A673 (cell line): ENCODE measurements at regions of chr19 and their contacts with region 1.

Region 1: GRCh38 chr19:3304871-3305423 is 61.4 kb upstream of the NFIC start:
- DNase-seq: peak; percentile 89
- H3K4me3 ChIP-seq: peak overlapping the region; percentile 9
- H3K27ac ChIP-seq: no peak overlapping the region
- H3K4me1 ChIP-seq: no peaks in the 10 kb centered on the region
- H3K27me3 ChIP-seq: no peaks in the 10 kb centered on the region
- CTCF ChIP-seq: peak; percentile 85

Region 2: GRCh38 chr19:2978454-2978767 is 326.5 kb before region 1 on chr19:
- CTCF ChIA-PET with region 1: interaction called, 4 read pairs
- POLR2A ChIA-PET with region 1: interaction called, 14 read pairs
- intact Hi-C with region 1: no loop called
- DNase-seq: no peak
- H3K4me3 ChIP-seq: no peak overlapping the region
- H3K27ac ChIP-seq: no peak overlapping the region
- H3K4me1 ChIP-seq: peaks cover 41% of the 10 kb centered on the region
- H3K27me3 ChIP-seq: no peaks in the 10 kb centered on the region
- CTCF ChIP-seq: no peak

Region 3: GRCh38 chr19:3163230-3163886 is 141.6 kb before region 1 on chr19:
- CTCF ChIA-PET with region 1: no interaction called
- POLR2A ChIA-PET with region 1: no interaction called
- intact Hi-C with region 1: no loop called
- DNase-seq: peak; percentile 85
- H3K4me3 ChIP-seq: no peak overlapping the region
- H3K27ac ChIP-seq: no peak overlapping the region
- H3K4me1 ChIP-seq: no peaks in the 10 kb centered on the region
- H3K27me3 ChIP-seq: no peaks in the 10 kb centered on the region
- CTCF ChIP-seq: peak; percentile 94

Region 4: DNA sequence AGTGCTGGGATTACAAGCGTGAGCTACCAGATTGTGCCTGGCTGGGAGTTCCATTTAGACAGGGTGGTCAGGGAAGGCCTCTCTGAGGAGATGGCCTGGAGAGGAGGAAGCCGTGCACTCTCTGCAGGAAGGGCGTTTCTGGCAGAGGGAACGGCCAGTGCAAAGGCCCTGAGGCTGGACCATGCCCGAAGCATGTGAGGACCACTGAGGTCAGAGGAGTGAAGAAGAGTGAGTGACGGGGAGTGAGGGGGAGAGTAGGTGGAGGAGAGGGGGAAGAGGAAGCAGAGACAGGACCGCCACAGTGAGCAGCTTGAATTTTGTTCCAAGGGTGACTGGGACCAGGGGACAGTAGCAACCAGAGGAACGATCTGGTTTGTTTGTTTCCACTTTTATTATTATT is 47.9 kb before region 1 on chr19:
- CTCF ChIA-PET with region 1: no interaction called
- POLR2A ChIA-PET with region 1: no interaction called
- intact Hi-C with region 1: no loop called
- DNase-seq: no peak
- H3K4me3 ChIP-seq: no peak overlapping the region
- H3K27ac ChIP-seq: no peak overlapping the region
- H3K4me1 ChIP-seq: no peaks in the 10 kb centered on the region
- H3K27me3 ChIP-seq: no peaks in the 10 kb centered on the region
- CTCF ChIP-seq: no peak

Region 5: GRCh38 chr19:3269916-3270667 is 34.9 kb before region 1 on chr19:
- CTCF ChIA-PET with region 1: no interaction called
- POLR2A ChIA-PET with region 1: no interaction called
- intact Hi-C with region 1: no loop called
- DNase-seq: no peak
- H3K4me3 ChIP-seq: no peak overlapping the region
- H3K27ac ChIP-seq: no peak overlapping the region
- H3K4me1 ChIP-seq: peaks cover 17% of the 10 kb centered on the region
- H3K27me3 ChIP-seq: peaks cover 17% of the 10 kb centered on the region
- CTCF ChIP-seq: no peak

Region 6: DNA sequence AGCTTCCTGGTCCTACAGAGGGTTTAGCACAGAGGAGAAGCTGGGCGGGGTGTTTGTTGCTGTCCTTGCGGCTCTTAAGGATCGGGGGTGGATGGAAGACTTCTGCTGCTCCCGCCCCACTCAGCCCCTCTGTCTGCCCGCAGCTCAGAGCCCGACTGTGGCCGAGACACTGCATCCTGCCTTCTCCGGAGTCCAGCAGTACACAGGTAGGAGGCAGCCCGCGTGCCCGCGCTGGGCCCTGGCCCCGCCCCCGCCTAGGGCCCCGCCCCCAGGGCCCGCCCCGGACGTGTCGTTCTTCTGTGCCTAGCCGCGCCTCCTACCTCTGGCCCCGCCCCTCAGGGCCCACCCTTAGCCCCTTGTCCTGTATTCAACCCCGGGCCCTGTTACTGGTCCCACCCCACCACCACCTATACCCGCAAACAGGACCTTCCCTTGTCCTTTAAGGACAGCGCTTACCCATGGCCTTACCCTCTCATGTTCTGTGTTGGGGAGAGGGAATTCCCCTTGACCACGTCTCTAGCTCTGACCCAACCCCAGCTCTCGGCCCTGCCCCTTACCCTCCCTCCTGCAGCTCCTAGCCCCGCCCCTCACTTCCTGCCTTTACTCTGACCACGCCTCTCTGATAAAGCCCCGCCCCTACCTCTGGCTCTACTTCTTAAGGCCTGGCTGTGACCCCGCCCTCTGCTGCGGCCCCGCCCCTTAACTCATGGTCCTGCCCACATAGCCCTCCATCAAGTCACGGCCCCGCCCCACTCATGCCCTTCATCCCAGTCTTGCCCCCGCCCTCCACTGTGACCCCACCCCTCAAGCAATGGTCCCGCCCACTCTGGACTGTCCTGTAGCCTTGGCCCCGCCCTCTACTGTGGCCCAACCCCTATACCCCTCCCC is 19.9 kb before region 1 on chr19:
- CTCF ChIA-PET with region 1: no interaction called
- POLR2A ChIA-PET with region 1: interaction called, 12 read pairs
- intact Hi-C with region 1: no loop called
- DNase-seq: peak; percentile 71
- H3K4me3 ChIP-seq: no peak overlapping the region
- H3K27ac ChIP-seq: no peak overlapping the region
- H3K4me1 ChIP-seq: peaks cover 10% of the 10 kb centered on the region
- H3K27me3 ChIP-seq: no peaks in the 10 kb centered on the region
- CTCF ChIP-seq: no peak

Region 7: GRCh38 chr19:3343619-3344502 is 38.9 kb after region 1 on chr19:
- CTCF ChIA-PET with region 1: no interaction called
- POLR2A ChIA-PET with region 1: no interaction called
- intact Hi-C with region 1: no loop called
- DNase-seq: peak; percentile 93
- H3K4me3 ChIP-seq: peak overlapping the region; percentile 51
- H3K27ac ChIP-seq: peak overlapping the region; percentile 57
- H3K4me1 ChIP-seq: peaks cover 9% of the 10 kb centered on the region
- H3K27me3 ChIP-seq: no peaks in the 10 kb centered on the region
- CTCF ChIP-seq: no peak

Region 8: GRCh38 chr19:3471954-3472655 is 167.2 kb after region 1 on chr19:
- CTCF ChIA-PET with region 1: interaction called, 4 read pairs
- POLR2A ChIA-PET with region 1: no interaction called
- intact Hi-C with region 1: loop called (anchors 5 kb)
- DNase-seq: peak; percentile 46
- H3K4me3 ChIP-seq: no peak overlapping the region
- H3K27ac ChIP-seq: no peak overlapping the region
- H3K4me1 ChIP-seq: no peaks in the 10 kb centered on the region
- H3K27me3 ChIP-seq: peaks cover 3% of the 10 kb centered on the region
- CTCF ChIP-seq: peak; percentile 97

Region 9: GRCh38 chr19:3479834-3480215 is 174.9 kb after region 1 on chr19:
- CTCF ChIA-PET with region 1: interaction called, 12 read pairs
- POLR2A ChIA-PET with region 1: no interaction called
- intact Hi-C with region 1: no loop called
- DNase-seq: peak; percentile 43
- H3K4me3 ChIP-seq: no peak overlapping the region
- H3K27ac ChIP-seq: no peak overlapping the region
- H3K4me1 ChIP-seq: no peaks in the 10 kb centered on the region
- H3K27me3 ChIP-seq: peaks cover 40% of the 10 kb centered on the region
- CTCF ChIP-seq: no peak